ENCODE measurements at regions of chr16 and their contacts with region 1.

Region 1: GRCh38 chr16:3400779-3401688 is at the starts of genes ZNF174 and ZSCAN32:
- DNase-seq: peak; percentile 90 to 99 (median 98)
- ATAC-seq: peak; percentile 99
- H3K4me3 ChIP-seq: peak within 1 kb of the TSS; percentile 87
- H3K4me3 Mint-ChIP-seq: peak within 1 kb of the TSS; percentile 84 to 97 (median 94)
- H3K27ac ChIP-seq: peak within 1 kb of the TSS; percentile 89
- H3K27ac Mint-ChIP-seq: peak within 1 kb of the TSS; percentile 88 to 95 (median 91)
- H3K4me1 ChIP-seq: peaks cover 20 to 22% of the 10 kb centered on the region in 2 donors
- H3K4me1 Mint-ChIP-seq: peaks cover 14 to 77% (median 65%) of the 10 kb centered on the region in 7 donors
- H3K27me3 ChIP-seq: no peaks in the 10 kb centered on the region
- H3K27me3 Mint-ChIP-seq: no peaks in the 10 kb centered on the region
- total RNA-seq, gene ZNF174: 4.7 to 22.8 (median 13.5) TPM
- total RNA-seq, gene ZSCAN32: 9.7 to 31.1 (median 19.0) TPM

Region 2: DNA sequence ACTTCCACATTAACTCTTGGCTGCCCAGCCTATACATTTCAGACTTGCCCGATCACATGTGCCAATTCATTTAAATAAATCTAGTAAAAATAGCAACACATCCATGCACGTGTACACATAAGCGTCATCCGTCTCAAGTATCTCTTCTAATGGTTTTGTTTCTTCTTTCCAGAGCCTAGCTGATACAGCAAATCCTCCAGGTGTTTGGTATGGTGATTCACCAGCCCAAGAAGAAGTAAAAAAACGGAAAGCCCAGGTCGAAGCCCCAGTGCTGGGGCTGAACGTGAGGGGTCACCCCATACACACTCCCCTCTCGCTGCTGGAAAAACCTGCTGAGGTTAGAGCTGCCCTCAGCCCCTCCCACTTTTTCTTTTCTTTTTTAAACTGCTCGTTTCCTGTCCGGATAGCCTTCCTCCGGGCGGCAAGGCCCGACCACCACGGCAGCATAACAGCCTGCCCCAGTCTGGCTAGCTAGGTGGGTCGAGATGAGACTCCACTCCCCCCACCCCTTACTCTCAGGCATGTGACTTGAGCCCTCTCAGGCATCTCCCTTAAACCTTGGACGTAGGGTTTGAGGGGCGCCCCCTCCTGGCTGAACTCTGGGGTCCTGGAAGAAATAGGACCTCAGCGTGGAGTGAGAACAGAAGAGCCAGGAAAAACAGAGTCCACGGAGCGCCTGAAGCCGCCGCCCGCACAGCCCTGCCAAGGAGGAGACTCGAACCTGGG is 227.0 kb before region 1 on chr16:
- CTCF ChIA-PET with region 1: no interaction called
- POLR2A ChIA-PET with region 1: no interaction called
- intact Hi-C with region 1: loop called in 1 of 2 experiments (anchors 5 kb)
- DNase-seq: no peak
- ATAC-seq: peak; percentile 13
- H3K4me3 ChIP-seq: no peak overlapping the region
- H3K4me3 Mint-ChIP-seq: peak overlapping the region in 9 of 10 donors; percentile 22 to 70 (median 54)
- H3K27ac ChIP-seq: no peak overlapping the region
- H3K27ac Mint-ChIP-seq: peak overlapping the region in 5 of 9 donors; percentile 2 to 71 (median 18)
- H3K4me1 ChIP-seq: peaks cover 29 to 39% of the 10 kb centered on the region in 2 donors
- H3K4me1 Mint-ChIP-seq: peaks cover 21 to 42% (median 34%) of the 10 kb centered on the region in 7 donors
- H3K27me3 ChIP-seq: peaks cover 3 to 37% of the 10 kb centered on the region in 2 donors
- H3K27me3 Mint-ChIP-seq: peaks cover 46 to 81% (median 53%) of the 10 kb centered on the region in 5 donors

Region 3: GRCh38 chr16:3234543-3235541 is 166.2 kb before region 1 on chr16 and contains the start of gene ZNF200:
- CTCF ChIA-PET with region 1: no interaction called
- POLR2A ChIA-PET with region 1: interaction called, 7 read pairs
- intact Hi-C with region 1: loop called in 1 of 2 experiments (anchors 2 kb)
- DNase-seq: peak; percentile 85 to 96 (median 94)
- ATAC-seq: peak; percentile 94
- H3K4me3 ChIP-seq: peak within 1 kb of the TSS; percentile 98
- H3K4me3 Mint-ChIP-seq: peak within 1 kb of the TSS; percentile 88 to 97 (median 94)
- H3K27ac ChIP-seq: peak within 1 kb of the TSS; percentile 90
- H3K27ac Mint-ChIP-seq: peak within 1 kb of the TSS; percentile 93 to 98 (median 97)
- H3K4me1 ChIP-seq: peaks cover 18 to 23% of the 10 kb centered on the region in 2 donors
- H3K4me1 Mint-ChIP-seq: peaks cover 20 to 48% (median 39%) of the 10 kb centered on the region in 7 donors
- H3K27me3 ChIP-seq: no peaks in the 10 kb centered on the region
- H3K27me3 Mint-ChIP-seq: peaks cover 0 to 3% (median 0%) of the 10 kb centered on the region in 5 donors
- total RNA-seq, gene ZNF200: 4.8 to 33.3 (median 16.6) TPM

Region 4: GRCh38 chr16:3364774-3365427 is 36.1 kb before region 1 on chr16:
- CTCF ChIA-PET with region 1: no interaction called
- POLR2A ChIA-PET with region 1: interaction called, 21 read pairs
- intact Hi-C with region 1: loop called in 1 of 2 experiments (anchors 1 kb)
- DNase-seq: peak; percentile 50 to 92 (median 87)
- ATAC-seq: peak; percentile 93
- H3K4me3 ChIP-seq: peak overlapping the region; percentile 70
- H3K4me3 Mint-ChIP-seq: peak overlapping the region; percentile 37 to 92 (median 84)
- H3K27ac ChIP-seq: peak overlapping the region; percentile 79
- H3K27ac Mint-ChIP-seq: peak overlapping the region; percentile 73 to 96 (median 91)
- H3K4me1 ChIP-seq: peaks cover 0 to 6% of the 10 kb centered on the region in 2 donors
- H3K4me1 Mint-ChIP-seq: peaks cover 0 to 19% (median 12%) of the 10 kb centered on the region in 7 donors
- H3K27me3 ChIP-seq: no peaks in the 10 kb centered on the region
- H3K27me3 Mint-ChIP-seq: peaks cover 0 to 30% (median 21%) of the 10 kb centered on the region in 5 donors

Region 5: DNA sequence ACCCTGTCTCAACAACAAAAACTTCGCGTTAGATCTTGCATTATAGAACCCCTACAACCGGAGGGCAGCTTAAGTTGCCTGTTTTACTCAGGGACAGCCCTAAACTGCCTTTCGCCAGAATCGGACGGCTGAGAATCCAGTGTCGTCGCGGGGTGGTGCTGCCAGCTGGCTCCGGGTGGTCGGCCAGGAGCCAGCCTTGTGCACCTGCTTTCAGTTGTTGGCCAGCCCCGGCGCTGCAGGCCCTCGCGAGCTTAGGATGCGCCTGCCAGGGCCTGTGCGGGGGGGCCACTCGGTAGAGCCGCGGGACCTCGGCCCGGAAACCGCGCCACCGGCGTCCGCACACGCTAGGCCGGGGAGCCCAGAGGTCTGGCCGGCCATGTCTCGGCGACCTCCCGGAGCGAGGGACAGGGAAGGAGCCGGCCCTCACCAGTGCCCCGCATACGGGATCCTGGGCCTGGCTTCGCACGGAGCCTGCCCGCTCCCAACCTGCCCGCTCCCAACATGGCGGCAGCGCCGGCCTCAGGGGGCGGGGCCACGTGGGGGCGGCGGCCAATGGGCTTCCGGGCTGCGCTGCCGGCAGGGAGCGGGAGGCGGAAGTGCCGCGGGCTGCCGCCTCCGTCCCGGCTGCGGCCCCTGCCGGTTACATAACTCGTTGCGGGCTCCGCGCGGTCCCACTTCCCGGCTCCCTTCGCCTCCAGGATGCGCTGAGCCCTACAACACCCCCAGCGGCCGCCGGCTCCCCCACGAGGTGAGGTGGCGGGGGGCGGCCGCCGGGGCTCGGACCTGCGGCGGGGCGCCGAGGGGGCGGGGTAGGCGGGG is 56.6 kb after region 1 on chr16:
- CTCF ChIA-PET with region 1: no interaction called
- POLR2A ChIA-PET with region 1: interaction called, 18 read pairs
- intact Hi-C with region 1: loop called (anchors 1 kb)
- DNase-seq: peak; percentile 87 to 95 (median 93)
- ATAC-seq: peak; percentile 96
- H3K4me3 ChIP-seq: peak overlapping the region; percentile 84
- H3K4me3 Mint-ChIP-seq: peak overlapping the region; percentile 78 to 88 (median 86)
- H3K27ac ChIP-seq: peak overlapping the region; percentile 96
- H3K27ac Mint-ChIP-seq: peak overlapping the region; percentile 74 to 94 (median 88)
- H3K4me1 ChIP-seq: peaks cover 37 to 45% of the 10 kb centered on the region in 2 donors
- H3K4me1 Mint-ChIP-seq: peaks cover 33 to 57% (median 48%) of the 10 kb centered on the region in 7 donors
- H3K27me3 ChIP-seq: no peaks in the 10 kb centered on the region
- H3K27me3 Mint-ChIP-seq: no peaks in the 10 kb centered on the region

Region 6: GRCh38 chr16:3611146-3611975 is 210.3 kb after region 1 on chr16 and contains the start of gene SLX4:
- CTCF ChIA-PET with region 1: no interaction called
- POLR2A ChIA-PET with region 1: no interaction called
- intact Hi-C with region 1: loop called in 1 of 2 experiments (anchors 1 kb)
- DNase-seq: peak; percentile 88 to 97 (median 95)
- ATAC-seq: peak; percentile 92
- H3K4me3 ChIP-seq: peak within 1 kb of the TSS; percentile 99
- H3K4me3 Mint-ChIP-seq: peak within 1 kb of the TSS; percentile 93 to 100 (median 99)
- H3K27ac ChIP-seq: peak within 1 kb of the TSS; percentile 90
- H3K27ac Mint-ChIP-seq: peak within 1 kb of the TSS; percentile 92 to 99 (median 98)
- H3K4me1 ChIP-seq: peaks cover 18 to 21% of the 10 kb centered on the region in 2 donors
- H3K4me1 Mint-ChIP-seq: peaks cover 37 to 70% (median 62%) of the 10 kb centered on the region in 7 donors
- H3K27me3 ChIP-seq: no peaks in the 10 kb centered on the region
- H3K27me3 Mint-ChIP-seq: no peaks in the 10 kb centered on the region
- total RNA-seq, gene SLX4: 7.1 to 12.5 (median 8.5) TPM